ENCODE measurements at regions of chr1 and their contacts with region 1.

Region 1: GRCh38 chr1:58941471-58942289 is 157.8 kb upstream of the JUN start:
- DNase-seq: peak in 9 of 14 experiments; percentile 10 to 86 (median 33)
- ATAC-seq: peak; percentile 84
- H3K4me3 ChIP-seq: peak overlapping the region; percentile 31
- H3K4me3 Mint-ChIP-seq: peak overlapping the region; percentile 57
- H3K27ac ChIP-seq: peak overlapping the region in 1 of 2 donors; percentile 3
- H3K27ac Mint-ChIP-seq: peak overlapping the region; percentile 60
- H3K4me1 ChIP-seq: peaks cover 55% of the 10 kb centered on the region
- H3K4me1 Mint-ChIP-seq: peaks cover 77% of the 10 kb centered on the region
- H3K27me3 ChIP-seq: no peaks in the 10 kb centered on the region
- H3K27me3 Mint-ChIP-seq: no peaks in the 10 kb centered on the region
- CTCF ChIP-seq: no peak

Region 2: GRCh38 chr1:58816072-58816746 is 125.5 kb before region 1 on chr1:
- CTCF ChIA-PET with region 1: no interaction called
- POLR2A ChIA-PET with region 1: no interaction called
- intact Hi-C with region 1: loop called in 1 of 2 experiments (anchors 10 kb)
- DNase-seq: peak; percentile 69 to 91 (median 82)
- ATAC-seq: peak; percentile 69
- H3K4me3 ChIP-seq: peak overlapping the region; percentile 82
- H3K4me3 Mint-ChIP-seq: peak overlapping the region; percentile 90
- H3K27ac ChIP-seq: peak overlapping the region; percentile 61 to 71
- H3K27ac Mint-ChIP-seq: peak overlapping the region; percentile 79
- H3K4me1 ChIP-seq: peaks cover 47% of the 10 kb centered on the region
- H3K4me1 Mint-ChIP-seq: peaks cover 51% of the 10 kb centered on the region
- H3K27me3 ChIP-seq: no peaks in the 10 kb centered on the region
- H3K27me3 Mint-ChIP-seq: no peaks in the 10 kb centered on the region
- CTCF ChIP-seq: no peak

Region 3: GRCh38 chr1:58857680-58858673 is 83.7 kb before region 1 on chr1:
- CTCF ChIA-PET with region 1: no interaction called
- POLR2A ChIA-PET with region 1: interaction called, 8 read pairs
- intact Hi-C with region 1: loop called in 1 of 2 experiments (anchors 5 kb)
- DNase-seq: peak in 11 of 14 experiments; percentile 2 to 54 (median 31)
- ATAC-seq: peak; percentile 87
- H3K4me3 ChIP-seq: no peak overlapping the region
- H3K4me3 Mint-ChIP-seq: peak overlapping the region; percentile 30
- H3K27ac ChIP-seq: peak overlapping the region; percentile 47 to 56
- H3K27ac Mint-ChIP-seq: peak overlapping the region; percentile 72
- H3K4me1 ChIP-seq: peaks cover 24% of the 10 kb centered on the region
- H3K4me1 Mint-ChIP-seq: peaks cover 51% of the 10 kb centered on the region
- H3K27me3 ChIP-seq: no peaks in the 10 kb centered on the region
- H3K27me3 Mint-ChIP-seq: no peaks in the 10 kb centered on the region
- CTCF ChIP-seq: no peak

Region 4: DNA sequence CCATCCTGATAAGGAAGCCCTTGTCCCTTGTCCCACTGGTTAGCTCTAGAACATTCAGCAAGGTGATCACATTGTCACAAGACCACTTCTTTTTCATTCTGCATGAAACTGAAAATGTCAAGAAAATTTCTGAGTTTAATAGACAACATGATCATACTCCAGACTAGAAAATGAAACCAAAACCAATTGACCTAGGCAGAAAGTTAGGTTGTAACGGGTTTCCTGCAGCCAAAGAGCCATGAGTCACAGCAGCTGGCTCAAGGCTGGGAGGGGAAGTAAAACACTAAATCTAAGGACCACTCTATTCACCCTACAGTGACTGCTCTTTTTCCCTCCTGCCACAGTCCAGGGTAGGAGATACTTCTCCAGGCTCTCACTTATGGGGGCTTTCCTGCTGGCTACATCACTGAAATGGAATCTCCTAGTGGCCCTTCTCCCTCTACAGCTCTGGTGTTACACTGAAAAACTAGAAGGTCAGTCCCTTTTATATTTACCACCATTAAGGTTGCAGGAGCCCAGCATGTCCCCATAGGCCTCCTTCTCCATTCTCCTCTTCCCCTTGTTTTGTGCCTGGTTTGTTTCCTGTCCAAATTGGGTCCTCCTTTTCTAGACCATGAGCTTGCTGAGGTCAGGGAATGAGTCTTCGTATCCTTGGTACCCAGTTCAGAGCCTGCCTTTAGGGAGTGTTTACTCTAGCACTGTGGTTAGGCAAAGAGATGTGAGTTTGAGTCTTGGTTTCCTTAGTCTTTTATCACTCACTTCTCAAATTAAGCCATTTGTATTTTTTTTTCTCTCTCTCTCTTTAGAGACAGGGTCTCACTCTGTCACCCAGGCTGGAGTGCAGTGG is 78.7 kb after region 1 on chr1:
- CTCF ChIA-PET with region 1: no interaction called
- POLR2A ChIA-PET with region 1: interaction called, 3 read pairs
- intact Hi-C with region 1: loop called in 1 of 2 experiments (anchors 10 kb)
- DNase-seq: peak; percentile 3 to 86 (median 35)
- ATAC-seq: peak; percentile 92
- H3K4me3 ChIP-seq: peak overlapping the region; percentile 46
- H3K4me3 Mint-ChIP-seq: peak overlapping the region; percentile 83
- H3K27ac ChIP-seq: peak overlapping the region; percentile 25 to 54
- H3K27ac Mint-ChIP-seq: peak overlapping the region; percentile 88
- H3K4me1 ChIP-seq: peaks cover 24% of the 10 kb centered on the region
- H3K4me1 Mint-ChIP-seq: peaks cover 17% of the 10 kb centered on the region
- H3K27me3 ChIP-seq: no peaks in the 10 kb centered on the region
- H3K27me3 Mint-ChIP-seq: no peaks in the 10 kb centered on the region
- CTCF ChIP-seq: no peak

Region 5: GRCh38 chr1:59076612-59077011 is 134.9 kb after region 1 on chr1:
- CTCF ChIA-PET with region 1: no interaction called
- POLR2A ChIA-PET with region 1: interaction called, 3 read pairs
- intact Hi-C with region 1: loop called in 1 of 2 experiments (anchors 10 kb)
- DNase-seq: no peak
- ATAC-seq: no peak
- H3K4me3 ChIP-seq: no peak overlapping the region
- H3K4me3 Mint-ChIP-seq: no peak overlapping the region
- H3K27ac ChIP-seq: no peak overlapping the region
- H3K27ac Mint-ChIP-seq: no peak overlapping the region
- H3K4me1 ChIP-seq: peaks cover 13% of the 10 kb centered on the region
- H3K4me1 Mint-ChIP-seq: peaks cover 11% of the 10 kb centered on the region
- H3K27me3 ChIP-seq: no peaks in the 10 kb centered on the region
- H3K27me3 Mint-ChIP-seq: no peaks in the 10 kb centered on the region
- CTCF ChIP-seq: peak; percentile 14

Region 6: DNA sequence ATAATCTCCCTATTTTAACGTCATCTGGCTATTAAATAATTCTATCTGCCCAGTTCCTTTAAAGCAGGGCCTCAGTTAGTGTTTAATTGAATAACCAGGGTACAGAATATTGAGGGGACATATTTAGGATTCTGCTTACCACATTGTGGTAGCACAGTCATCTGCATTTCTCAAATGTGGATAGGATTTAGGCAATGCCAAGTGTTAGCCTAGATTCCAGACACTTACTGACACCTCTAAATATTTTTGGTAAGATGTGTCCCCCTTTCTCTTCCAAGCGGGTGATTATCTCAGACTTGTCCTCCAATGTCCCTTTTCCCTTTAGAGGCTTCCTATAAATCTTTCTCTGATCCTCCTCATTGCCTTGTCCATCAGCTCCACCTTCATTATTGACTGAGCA is 712.3 kb after region 1 on chr1:
- CTCF ChIA-PET with region 1: no interaction called
- POLR2A ChIA-PET with region 1: no interaction called
- intact Hi-C with region 1: no loop called
- DNase-seq: no peak
- ATAC-seq: no peak
- H3K4me3 ChIP-seq: no peak overlapping the region
- H3K4me3 Mint-ChIP-seq: no peak overlapping the region
- H3K27ac ChIP-seq: no peak overlapping the region
- H3K27ac Mint-ChIP-seq: no peak overlapping the region
- H3K4me1 ChIP-seq: no peaks in the 10 kb centered on the region
- H3K4me1 Mint-ChIP-seq: no peaks in the 10 kb centered on the region
- H3K27me3 ChIP-seq: no peaks in the 10 kb centered on the region
- H3K27me3 Mint-ChIP-seq: no peaks in the 10 kb centered on the region
- CTCF ChIP-seq: no peak

Measured in CD4-positive, alpha-beta T cell (primary cell).